Activated CD4-positive, alpha-beta memory T cell treated with anti-CD3 and anti-CD28 coated beads, Interleukin-2, amount 10 ng/mL, durations not matched to agents 7 days and 5 days (primary cell): ENCODE measurements at regions of chr10 and their contacts with region 1.

Region 1: DNA sequence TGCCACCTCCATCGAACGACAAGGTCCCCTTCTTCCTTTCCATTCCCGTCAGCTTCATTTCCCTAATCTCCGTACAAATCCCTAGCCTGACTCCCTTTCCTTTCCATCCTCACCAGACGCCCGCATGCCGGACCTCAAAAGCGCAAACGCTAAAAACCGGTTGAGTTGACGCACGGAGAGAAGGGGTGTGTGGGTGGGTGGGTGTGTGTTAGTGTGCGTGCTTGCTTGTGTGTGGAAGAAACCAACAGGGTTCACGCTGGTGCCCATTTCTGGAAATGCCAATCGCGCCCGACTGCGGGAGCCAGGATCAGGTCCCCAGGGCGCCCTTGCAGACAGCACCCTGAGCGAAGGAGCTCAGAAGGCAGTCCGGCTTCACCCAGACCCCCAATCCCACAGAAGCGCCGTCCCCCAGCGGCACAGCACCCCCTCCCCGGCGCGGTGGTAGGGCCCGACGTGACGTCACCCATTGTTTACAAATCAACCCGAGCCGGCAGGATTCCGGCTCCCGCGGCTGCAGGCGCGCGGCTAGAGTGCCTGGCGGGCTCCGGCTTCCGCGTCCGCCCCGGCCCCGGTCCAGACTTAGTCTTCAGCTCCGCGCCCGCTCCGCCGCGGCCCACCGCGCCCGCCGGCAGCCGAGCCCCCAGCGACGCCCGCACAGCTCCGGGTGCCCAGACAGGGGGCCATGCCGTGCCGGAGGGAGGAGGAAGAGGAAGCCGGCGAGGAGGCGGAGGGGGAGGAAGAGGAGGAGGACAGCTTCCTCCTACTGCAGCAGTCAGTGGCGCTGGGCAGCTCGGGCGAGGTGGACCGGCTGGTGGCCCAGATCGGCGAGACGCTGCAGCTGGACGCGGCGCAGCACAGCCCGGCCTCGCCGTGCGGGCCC is at the start of gene FRAT1:
- DNase-seq: peak; percentile 88
- H3K4me3 Mint-ChIP-seq: peak within 1 kb of the TSS; percentile 80
- H3K27ac Mint-ChIP-seq: peak within 1 kb of the TSS; percentile 93
- H3K4me1 Mint-ChIP-seq: peaks cover 25% of the 10 kb centered on the region
- H3K27me3 Mint-ChIP-seq: peaks cover 4% of the 10 kb centered on the region
- total RNA-seq, gene FRAT1: 6.9 to 7.6 TPM

Region 2: GRCh38 chr10:97334370-97335175 is 15.6 kb after region 1 on chr10 and contains the start of gene FRAT2:
- CTCF ChIA-PET with region 1: interaction called, 14 read pairs
- POLR2A ChIA-PET with region 1: interaction called, 51 read pairs
- DNase-seq: peak; percentile 87
- H3K4me3 Mint-ChIP-seq: peak within 1 kb of the TSS; percentile 84
- H3K27ac Mint-ChIP-seq: peak within 1 kb of the TSS; percentile 79
- H3K4me1 Mint-ChIP-seq: peaks cover 35% of the 10 kb centered on the region
- H3K27me3 Mint-ChIP-seq: peaks cover 23% of the 10 kb centered on the region
- total RNA-seq, gene FRAT2: 11.1 to 11.5 TPM